HEK293 (cell line): ENCODE measurements at regions of chr9 and their contacts with region 1.

Region 1: DNA sequence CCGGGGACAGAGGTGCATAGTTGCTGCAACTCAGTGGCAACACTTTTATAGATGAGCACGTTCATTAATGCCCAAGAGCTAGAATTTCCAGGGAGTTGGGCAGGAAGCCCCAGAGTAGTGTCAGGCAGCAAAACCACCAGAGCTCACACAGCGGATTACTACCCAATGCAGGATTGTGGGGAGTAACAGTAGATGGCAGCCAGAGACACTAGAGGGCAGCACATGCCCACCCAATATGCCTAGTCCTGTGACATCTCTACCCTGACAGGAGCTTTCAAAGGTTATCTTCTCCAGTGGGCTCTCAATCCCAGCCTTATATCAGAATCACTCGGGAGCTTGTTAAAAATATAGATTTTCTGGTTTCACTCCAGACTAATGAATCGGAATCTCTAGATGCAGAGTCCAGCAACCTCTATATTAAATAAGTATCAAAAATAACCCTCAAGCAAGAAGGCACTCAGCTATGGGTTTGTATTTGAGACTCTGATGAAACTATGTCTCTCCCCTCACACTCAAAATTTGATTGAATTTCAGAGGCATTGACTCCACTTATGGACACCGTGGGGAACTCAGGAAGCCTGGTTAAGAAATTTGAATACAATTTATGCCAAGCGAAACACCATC is 58.4 kb upstream of the PHF24 start:
- H3K4me3 ChIP-seq: no peak overlapping the region
- H3K27ac ChIP-seq: no peak overlapping the region
- H3K4me1 ChIP-seq: no peaks in the 10 kb centered on the region
- CTCF ChIP-seq: peak; percentile 49

Region 2: GRCh38 chr9:34929506-34930102 is 30.0 kb after region 1 on chr9:
- CTCF ChIA-PET with region 1: interaction called, 24 read pairs
- POLR2A ChIA-PET with region 1: no interaction called
- H3K4me3 ChIP-seq: no peak overlapping the region
- H3K27ac ChIP-seq: no peak overlapping the region
- H3K4me1 ChIP-seq: no peaks in the 10 kb centered on the region
- CTCF ChIP-seq: no peak

Region 3: DNA sequence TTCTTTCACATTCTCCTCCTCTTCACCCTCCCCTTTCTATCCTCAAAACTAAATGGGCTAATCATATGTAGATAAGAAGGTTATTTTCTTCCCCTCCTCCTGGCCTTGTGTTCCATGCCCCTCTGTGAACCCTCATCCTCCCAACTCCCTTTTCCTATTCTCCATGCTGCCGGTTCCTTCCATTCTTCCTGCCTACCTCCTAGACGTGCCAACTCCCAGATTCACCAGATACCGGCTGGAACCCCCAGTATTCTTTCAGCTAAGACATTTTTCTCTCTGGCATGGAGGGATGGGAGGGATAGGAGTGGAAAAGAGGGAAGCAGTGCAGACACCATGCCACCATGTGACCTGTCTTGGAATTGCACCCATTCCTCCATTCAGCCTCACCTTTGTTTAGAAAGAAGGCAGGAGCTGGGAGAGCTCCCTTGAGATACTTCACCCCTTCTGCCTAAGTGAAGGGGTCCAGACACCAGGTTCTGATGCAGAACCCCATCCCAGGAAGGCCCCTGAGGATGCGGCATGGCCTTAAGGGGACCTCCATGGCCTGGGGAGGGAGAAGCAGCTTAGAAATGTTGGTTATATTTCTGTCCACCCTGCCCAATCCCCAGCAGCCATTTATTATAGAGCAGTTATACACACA is 94.7 kb after region 1 on chr9:
- CTCF ChIA-PET with region 1: interaction called, 116 read pairs
- POLR2A ChIA-PET with region 1: interaction called, 6 read pairs
- H3K4me3 ChIP-seq: no peak overlapping the region
- H3K27ac ChIP-seq: no peak overlapping the region
- H3K4me1 ChIP-seq: peaks cover 2% of the 10 kb centered on the region; the same call in 1 of the 2 replicates
- CTCF ChIP-seq: peak; percentile 43; the same call in 1 of the 2 replicates

Region 4: DNA sequence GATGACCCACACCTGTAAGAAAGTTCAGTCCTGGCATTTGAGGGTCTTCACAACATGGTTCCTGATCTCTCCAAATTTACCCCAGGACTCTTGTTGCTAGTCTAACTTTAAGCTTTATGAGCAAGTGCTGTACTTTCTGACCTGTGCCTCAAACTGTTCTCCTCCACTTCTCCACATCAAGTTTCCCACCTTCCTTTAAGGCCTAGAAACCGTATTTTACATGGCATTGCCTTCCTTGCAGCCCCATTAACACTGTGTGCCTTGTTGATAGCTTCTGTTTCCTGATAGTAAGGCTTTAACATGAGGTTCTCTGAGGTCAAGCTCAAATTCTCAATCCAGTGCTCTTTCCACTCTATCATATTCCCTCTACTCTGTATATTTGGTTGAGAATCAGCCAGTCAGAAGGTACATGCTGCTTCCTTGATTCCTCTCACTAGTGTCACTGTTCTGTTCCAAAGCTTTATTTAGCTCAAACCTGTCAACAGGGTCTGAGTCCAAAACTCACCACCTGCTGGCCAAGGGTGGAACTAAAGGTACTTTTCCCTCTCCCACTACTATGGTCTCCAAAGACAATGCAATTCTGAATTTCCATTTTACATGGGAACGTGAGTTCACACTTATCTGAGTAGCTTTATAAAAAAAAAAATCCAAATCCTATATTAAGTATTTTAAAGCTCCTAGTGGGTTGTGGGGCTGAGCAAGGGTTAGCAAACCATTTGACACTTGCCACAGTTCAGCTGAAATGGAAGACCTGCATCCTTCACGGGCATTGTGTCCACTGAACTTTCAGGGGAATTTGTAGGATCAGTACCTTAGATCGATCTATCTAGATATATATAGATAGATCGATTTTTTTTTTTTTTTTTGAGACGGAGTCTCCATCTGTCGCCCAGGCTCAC is 151.7 kb after region 1 on chr9:
- CTCF ChIA-PET with region 1: interaction called, 72 read pairs
- POLR2A ChIA-PET with region 1: interaction called, 7 read pairs
- H3K4me3 ChIP-seq: no peak overlapping the region
- H3K27ac ChIP-seq: no peak overlapping the region
- H3K4me1 ChIP-seq: no peaks in the 10 kb centered on the region
- CTCF ChIP-seq: no peak

Region 5: DNA sequence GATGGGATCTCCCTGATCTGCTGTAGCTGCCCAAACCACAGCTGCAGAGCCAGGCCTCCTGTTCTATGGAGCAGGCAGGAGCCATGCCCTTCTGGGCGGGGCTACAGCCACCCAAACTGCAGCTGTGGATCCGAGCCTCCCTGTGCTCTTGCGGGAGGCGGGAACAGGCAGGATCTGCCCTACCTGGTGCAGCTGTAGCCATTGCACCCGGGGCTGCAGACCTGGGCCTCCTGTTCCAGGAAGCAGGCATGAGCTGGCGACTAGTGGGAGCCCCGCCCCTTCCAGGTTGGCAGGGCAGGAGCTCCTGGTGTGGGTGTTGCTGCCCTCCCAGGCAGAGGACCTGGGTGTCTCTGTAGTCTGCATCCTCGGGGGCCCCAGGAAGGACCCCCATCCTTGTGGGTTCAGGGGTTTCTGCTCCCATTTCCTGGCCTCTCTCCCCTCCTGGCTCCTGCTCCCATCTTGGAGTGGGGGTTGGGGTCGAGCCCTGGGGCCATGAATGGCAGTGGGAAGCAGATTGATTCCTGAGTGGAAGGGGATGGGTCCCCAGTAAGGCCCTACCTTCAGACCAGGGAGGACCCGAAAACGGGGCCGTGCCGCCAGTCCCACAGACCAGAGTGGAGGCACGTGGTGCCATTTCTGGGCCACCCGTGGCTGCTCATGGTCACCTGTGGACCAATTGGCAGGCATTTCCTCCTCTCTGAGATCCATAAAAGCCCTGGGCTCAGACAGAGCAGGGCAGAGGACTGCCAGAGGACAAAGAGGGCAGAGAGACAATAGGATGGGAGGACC is 239.2 kb after region 1 on chr9:
- CTCF ChIA-PET with region 1: no interaction called
- POLR2A ChIA-PET with region 1: no interaction called
- H3K4me3 ChIP-seq: no peak overlapping the region
- H3K27ac ChIP-seq: no peak overlapping the region
- H3K4me1 ChIP-seq: no peaks in the 10 kb centered on the region
- CTCF ChIP-seq: no peak

Region 6: GRCh38 chr9:35179347-35180287 is 280.0 kb after region 1 on chr9:
- CTCF ChIA-PET with region 1: no interaction called
- POLR2A ChIA-PET with region 1: no interaction called
- H3K4me3 ChIP-seq: no peak overlapping the region
- H3K27ac ChIP-seq: no peak overlapping the region
- H3K4me1 ChIP-seq: 0 out of 2 replicates have a peak, but pooled peaks cover 2% of the 10 kb centered on the region
- CTCF ChIP-seq: no peak

Region 7: DNA sequence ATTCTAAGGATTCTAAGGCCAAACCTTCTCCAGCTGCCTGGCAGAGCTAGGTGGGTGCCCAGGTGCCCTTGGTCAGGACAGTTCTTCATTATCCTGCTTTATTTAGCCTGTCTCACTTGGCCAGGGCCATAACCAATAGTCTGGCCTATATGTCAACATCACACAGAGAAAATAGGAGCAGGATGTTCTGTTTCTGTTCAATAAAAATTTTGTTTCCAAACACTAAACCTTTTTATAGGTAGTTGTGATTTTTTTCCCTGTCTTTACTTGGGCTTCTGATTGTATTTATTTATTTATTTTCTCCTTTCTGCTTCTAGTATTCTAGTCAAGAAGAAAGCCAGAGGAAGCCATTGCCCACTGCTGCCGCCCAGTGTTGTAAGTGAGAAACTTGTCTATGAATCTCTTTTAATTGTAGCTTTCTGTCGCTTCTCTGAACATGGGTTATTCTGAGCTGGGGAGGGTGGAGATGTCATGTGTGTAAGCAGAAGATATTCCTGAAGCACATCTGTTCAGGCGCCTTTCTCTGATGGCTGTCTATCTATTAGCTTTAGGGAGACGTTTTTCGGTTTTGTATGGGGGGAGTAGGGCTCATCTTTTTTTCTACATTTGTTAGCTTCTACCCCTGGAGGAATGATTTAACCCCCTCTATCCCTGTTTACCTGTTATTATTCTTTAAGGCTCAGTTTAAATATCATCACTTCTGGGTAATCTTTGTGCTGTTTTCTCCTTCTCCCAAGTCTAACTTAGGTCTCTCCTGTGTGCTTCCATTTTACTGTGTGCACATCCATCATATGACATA is 359.2 kb after region 1 on chr9:
- CTCF ChIA-PET with region 1: interaction called, 13 read pairs
- POLR2A ChIA-PET with region 1: no interaction called
- H3K4me3 ChIP-seq: no peak overlapping the region
- H3K27ac ChIP-seq: no peak overlapping the region
- H3K4me1 ChIP-seq: no peaks in the 10 kb centered on the region
- CTCF ChIP-seq: 0 out of 2 replicates have a peak, but pooled peaks have one; percentile 25